ENCODE measurements at regions of chr22 and their contacts with region 1.

Region 1: GRCh38 chr22:30423982-30424963 is 1.3 kb upstream of the MTFP1 start:
- DNase-seq: peak; percentile 99

Region 2: GRCh38 chr22:30224161-30224857 is 200.0 kb before region 1 on chr22:
- CTCF ChIA-PET with region 1: no interaction called
- POLR2A ChIA-PET with region 1: no interaction called
- DNase-seq: no peak

Region 3: GRCh38 chr22:30396871-30397655 is 27.2 kb before region 1 on chr22 and contains the start of gene SEC14L2:
- CTCF ChIA-PET with region 1: interaction called, 7 read pairs
- POLR2A ChIA-PET with region 1: interaction called, 85 read pairs
- DNase-seq: peak; percentile 74

Region 4: DNA sequence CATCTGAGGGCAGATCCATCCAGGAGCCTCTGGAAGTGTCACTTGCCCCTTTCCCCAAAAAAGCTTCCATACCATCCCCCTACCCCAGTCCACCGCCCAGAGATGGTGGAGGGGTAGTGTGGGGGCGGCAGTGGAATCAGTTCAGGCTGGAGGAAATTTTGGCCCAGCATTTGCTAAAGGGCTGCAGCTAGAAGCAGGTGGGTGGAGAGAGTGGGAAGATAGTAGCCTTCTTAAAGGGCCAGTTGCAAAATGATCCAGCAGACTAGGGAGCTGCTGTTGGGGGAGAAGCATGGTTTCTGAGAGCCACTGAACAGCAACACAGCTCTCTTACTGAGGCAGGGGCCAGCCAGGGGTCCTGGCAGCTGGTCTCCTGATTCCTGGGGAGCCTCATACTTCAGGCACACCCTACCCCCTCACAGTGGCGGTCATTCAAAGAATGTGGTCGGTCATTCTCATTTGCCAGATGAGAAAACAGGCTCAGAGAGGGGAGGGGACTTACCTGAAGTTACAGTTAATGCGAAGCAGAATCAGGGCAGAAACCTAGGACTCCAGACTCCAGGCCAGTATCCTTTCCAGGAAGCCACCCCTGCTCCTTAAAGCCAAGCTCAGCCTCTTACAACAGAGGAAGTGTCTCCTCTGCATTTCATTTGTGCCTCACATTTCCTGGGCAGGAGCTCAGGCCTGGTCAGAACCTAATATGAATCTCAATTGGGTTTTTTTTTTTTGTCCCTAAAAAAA is 22.1 kb before region 1 on chr22:
- CTCF ChIA-PET with region 1: interaction called, 7 read pairs
- POLR2A ChIA-PET with region 1: interaction called, 85 read pairs
- DNase-seq: no peak

Region 5: GRCh38 chr22:30413745-30414524 is 10.3 kb before region 1 on chr22:
- CTCF ChIA-PET with region 1: no interaction called
- POLR2A ChIA-PET with region 1: interaction called, 40 read pairs
- DNase-seq: no peak

Region 6: GRCh38 chr22:30435674-30436126 is 11.4 kb after region 1 on chr22:
- CTCF ChIA-PET with region 1: interaction called, 5 read pairs
- POLR2A ChIA-PET with region 1: interaction called, 18 read pairs
- DNase-seq: no peak

Region 7: GRCh38 chr22:30444632-30445437 is 20.6 kb after region 1 on chr22:
- CTCF ChIA-PET with region 1: no interaction called
- POLR2A ChIA-PET with region 1: interaction called, 16 read pairs
- DNase-seq: peak; percentile 91

Measured in HEK293T (cell line).